WTC11 (cell line): ENCODE measurements at regions of chr11 and their contacts with region 1.

Region 1: DNA sequence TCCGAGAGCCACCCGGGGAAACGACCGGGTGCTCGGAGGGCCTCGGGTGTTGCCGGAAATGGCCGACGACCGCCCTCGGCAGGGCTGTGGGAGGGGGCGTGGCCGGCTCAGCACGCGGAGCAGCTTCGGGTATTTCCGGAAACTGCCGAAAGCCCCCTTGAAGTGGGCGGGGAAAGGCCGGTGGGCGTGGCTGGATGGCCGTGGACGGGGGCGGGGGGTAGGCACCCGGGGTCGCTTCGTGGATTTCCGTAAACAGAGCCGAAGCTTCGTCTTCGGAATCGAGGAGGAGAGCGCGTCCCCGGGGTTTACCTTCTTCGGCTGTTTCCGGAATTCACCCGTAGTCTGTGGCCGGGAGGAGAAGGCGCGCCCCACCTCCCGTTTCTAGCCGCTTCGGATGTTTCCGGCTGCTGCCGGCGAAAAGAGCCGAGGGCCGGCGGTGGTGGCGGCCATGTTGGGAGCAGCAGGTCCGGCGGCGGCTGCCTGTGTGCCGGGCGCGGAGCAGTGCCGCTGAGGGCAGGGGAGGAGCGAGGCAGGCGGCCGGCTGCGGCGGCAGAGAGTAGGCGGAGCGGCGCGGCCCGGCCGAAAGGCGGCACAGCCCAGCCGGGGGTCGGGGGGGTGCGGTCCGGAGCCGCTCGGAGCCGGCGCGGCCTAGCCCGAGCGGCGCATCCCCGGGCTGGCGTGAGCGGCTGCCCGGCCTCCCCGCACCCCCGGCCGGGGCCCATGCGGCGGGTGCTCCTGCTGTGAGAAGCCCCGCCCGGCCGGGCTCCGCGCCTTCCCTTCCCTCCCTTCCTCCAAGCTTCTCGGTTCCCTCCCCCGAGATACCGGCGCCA is at the start of gene MARK2:
- DNase-seq: peak; percentile 99
- ATAC-seq: peak; percentile 88
- H3K4me3 Mint-ChIP-seq: peak within 1 kb of the TSS; percentile 90
- H3K27ac Mint-ChIP-seq: peak within 1 kb of the TSS; percentile 93
- H3K4me1 Mint-ChIP-seq: peaks cover 58% of the 10 kb centered on the region
- H3K27me3 Mint-ChIP-seq: no peaks in the 10 kb centered on the region
- CTCF ChIP-seq: no peak
- total RNA-seq, gene MARK2: 50.8 to 57.4 TPM (median 51.4 TPM) in 3 replicates

Region 2: DNA sequence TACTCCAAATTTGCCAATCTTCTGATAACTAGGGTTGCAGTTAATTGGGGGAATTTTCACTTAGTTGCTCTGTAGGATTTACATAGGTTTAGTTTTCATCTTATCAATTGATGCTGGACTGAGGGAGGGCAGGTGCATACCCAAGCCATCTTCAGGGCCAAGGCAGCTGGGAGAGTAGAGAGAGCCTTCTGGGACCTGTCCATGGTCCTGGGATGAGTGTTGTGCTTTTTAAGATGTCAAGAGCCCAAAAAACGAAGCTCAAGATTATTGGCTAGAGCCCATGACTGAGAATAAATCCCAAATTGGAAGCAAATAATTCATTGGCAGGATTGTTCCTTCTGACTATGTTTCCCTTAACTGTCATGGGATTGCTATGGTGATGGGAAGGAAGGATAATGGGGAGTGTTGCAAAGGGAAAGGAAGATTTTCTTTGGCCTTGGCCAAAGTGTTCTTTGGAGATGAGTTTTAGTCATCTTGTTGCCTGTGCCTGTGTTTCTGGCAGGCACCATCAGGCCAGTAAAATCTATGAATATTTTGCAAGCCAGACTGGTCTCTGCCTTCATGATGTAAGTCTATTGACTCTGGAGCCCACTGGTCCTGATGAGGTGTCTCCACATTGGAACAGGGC is 858.6 kb before region 1 on chr11:
- CTCF ChIA-PET with region 1: no interaction called
- POLR2A ChIA-PET with region 1: no interaction called
- DNase-seq: no peak
- ATAC-seq: no peak
- H3K4me3 Mint-ChIP-seq: no peak overlapping the region
- H3K27ac Mint-ChIP-seq: no peak overlapping the region
- H3K4me1 Mint-ChIP-seq: no peaks in the 10 kb centered on the region
- H3K27me3 Mint-ChIP-seq: no peaks in the 10 kb centered on the region
- CTCF ChIP-seq: no peak

Region 3: DNA sequence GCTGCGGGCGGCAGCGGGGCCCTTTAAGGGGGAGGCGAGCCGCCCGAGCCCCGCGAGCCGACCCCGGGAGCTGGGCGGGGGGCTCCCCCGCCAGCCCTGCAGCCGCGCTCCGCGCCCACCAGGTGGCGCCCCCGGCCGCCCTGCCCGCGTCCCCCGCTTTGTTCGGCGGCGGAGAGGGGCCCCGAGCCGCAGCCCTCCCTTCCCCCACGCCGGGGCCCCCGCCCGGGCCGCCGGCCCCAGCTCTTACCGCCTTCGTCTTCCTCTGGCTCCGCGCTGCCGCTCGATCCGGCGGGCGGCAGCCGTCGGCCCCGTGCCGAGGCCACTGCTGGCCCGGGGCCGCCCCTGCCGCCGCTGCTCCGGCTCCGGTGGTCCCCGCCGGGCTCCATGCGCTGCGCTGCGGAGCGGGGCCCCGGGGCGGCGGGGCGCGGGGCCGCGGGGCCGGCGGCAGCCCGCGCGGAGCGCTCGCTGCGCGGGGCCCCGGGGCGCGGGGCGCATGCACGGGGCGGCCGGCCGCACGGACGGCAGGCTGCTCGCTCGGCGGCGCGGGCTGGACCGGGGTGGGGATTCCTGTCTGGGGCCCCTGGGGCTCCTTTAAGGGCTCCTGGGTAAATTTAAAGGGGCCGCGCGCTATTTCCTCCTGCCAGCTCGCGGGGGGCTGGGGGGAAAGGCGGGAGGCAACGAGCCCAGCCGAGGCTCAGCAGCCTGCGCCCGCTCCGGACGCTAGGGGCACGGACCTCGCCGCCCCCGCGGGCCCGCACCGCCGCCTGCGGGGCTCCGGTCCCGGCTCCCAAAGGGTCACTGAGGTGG is 70.5 kb before region 1 on chr11 and contains the start of gene ZFTA:
- CTCF ChIA-PET with region 1: interaction called, 26 read pairs
- POLR2A ChIA-PET with region 1: interaction called, 3 read pairs
- DNase-seq: peak; percentile 75
- ATAC-seq: peak; percentile 6
- H3K4me3 Mint-ChIP-seq: peak within 1 kb of the TSS; percentile 98
- H3K27ac Mint-ChIP-seq: peak within 1 kb of the TSS; percentile 98
- H3K4me1 Mint-ChIP-seq: peaks cover 37% of the 10 kb centered on the region
- H3K27me3 Mint-ChIP-seq: peaks cover 32% of the 10 kb centered on the region
- CTCF ChIP-seq: peak; percentile 78
- total RNA-seq, gene ZFTA: 44.7 to 47.2 TPM (median 45.6 TPM) in 3 replicates

Region 4: GRCh38 chr11:63871962-63872799 is 33.3 kb after region 1 on chr11:
- CTCF ChIA-PET with region 1: interaction called, 16 read pairs
- POLR2A ChIA-PET with region 1: no interaction called
- DNase-seq: peak; percentile 55
- ATAC-seq: peak; percentile 86
- H3K4me3 Mint-ChIP-seq: no peak overlapping the region
- H3K27ac Mint-ChIP-seq: peak overlapping the region; percentile 94
- H3K4me1 Mint-ChIP-seq: peaks cover 55% of the 10 kb centered on the region
- H3K27me3 Mint-ChIP-seq: no peaks in the 10 kb centered on the region
- CTCF ChIP-seq: no peak

Region 5: DNA sequence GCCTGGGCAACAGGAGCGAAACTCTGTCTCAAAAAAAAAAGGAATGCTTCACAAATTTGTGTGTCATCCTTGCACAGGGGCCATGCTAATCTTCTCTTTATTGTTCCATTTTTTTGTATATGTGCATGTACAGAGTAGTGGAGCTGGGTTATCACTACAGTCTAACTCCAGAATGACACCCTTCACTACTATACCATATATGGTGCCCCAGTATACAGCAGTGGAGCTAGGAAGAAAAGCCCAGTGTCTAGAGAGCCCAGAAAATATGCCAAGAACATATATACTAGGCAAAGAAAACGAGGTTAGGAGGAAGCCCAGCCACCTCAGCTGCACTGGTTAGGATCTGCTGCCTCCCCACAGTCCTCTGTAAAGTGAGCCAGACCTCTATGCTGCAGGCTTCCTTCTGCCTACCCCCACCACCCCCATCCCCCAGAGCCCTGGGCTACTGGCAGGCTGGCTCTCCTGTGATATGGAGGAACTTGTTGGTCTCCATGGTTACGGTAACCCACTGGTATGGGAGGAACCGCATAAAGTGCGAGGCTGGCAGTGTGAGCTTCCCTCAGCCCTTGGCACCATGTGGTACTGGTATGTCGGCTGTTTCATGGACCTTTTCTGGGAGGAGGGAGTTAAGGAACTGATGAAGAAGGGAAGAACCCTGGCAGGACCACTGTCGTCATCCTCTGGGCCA is 43.8 kb after region 1 on chr11:
- CTCF ChIA-PET with region 1: interaction called, 10 read pairs
- POLR2A ChIA-PET with region 1: interaction called, 3 read pairs
- DNase-seq: peak; percentile 68
- ATAC-seq: peak; percentile 88
- H3K4me3 Mint-ChIP-seq: no peak overlapping the region
- H3K27ac Mint-ChIP-seq: peak overlapping the region; percentile 84; the same call in 1 of the 2 replicates
- H3K4me1 Mint-ChIP-seq: peaks cover 69% of the 10 kb centered on the region
- H3K27me3 Mint-ChIP-seq: no peaks in the 10 kb centered on the region; the same call in 1 of the 2 replicates
- CTCF ChIP-seq: no peak

Region 6: GRCh38 chr11:63933459-63933858 is 94.6 kb after region 1 on chr11:
- CTCF ChIA-PET with region 1: interaction called, 28 read pairs
- POLR2A ChIA-PET with region 1: no interaction called
- DNase-seq: no peak
- ATAC-seq: no peak
- H3K4me3 Mint-ChIP-seq: no peak overlapping the region
- H3K27ac Mint-ChIP-seq: no peak overlapping the region
- H3K4me1 Mint-ChIP-seq: peaks cover 12% of the 10 kb centered on the region
- H3K27me3 Mint-ChIP-seq: peaks cover 32% of the 10 kb centered on the region
- CTCF ChIP-seq: no peak